ENCODE measurements at regions of chr21 and their contacts with region 1.

Region 1: DNA sequence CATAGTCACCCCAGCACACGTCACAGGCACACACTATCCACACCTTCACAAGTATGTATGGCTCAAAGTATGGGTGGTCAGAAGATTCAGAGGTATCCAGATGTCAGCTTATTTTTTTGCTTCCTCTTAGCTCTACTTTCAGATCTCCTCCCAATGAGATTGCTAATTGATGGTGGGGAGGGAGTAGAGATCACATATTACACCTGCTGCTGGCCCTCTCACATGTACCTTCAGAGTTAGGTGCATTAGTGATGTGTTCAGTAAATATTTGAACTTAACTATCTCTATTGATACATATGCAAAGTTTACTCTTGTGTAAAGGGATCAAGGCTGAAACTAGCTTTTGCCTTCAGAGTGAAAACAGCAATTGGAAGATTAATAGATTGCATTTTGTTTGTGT is 262.6 kb downstream of the PCP4 start:
- DNase-seq: no peak
- H3K4me3 ChIP-seq: no peak overlapping the region
- H3K27ac ChIP-seq: no peak overlapping the region
- H3K4me1 ChIP-seq: no peaks in the 10 kb centered on the region
- H3K27me3 ChIP-seq: no peaks in the 10 kb centered on the region
- CTCF ChIP-seq: no peak
- EP300 ChIP-seq: no peak
- POLR2A ChIP-seq: no peak

Region 2: DNA sequence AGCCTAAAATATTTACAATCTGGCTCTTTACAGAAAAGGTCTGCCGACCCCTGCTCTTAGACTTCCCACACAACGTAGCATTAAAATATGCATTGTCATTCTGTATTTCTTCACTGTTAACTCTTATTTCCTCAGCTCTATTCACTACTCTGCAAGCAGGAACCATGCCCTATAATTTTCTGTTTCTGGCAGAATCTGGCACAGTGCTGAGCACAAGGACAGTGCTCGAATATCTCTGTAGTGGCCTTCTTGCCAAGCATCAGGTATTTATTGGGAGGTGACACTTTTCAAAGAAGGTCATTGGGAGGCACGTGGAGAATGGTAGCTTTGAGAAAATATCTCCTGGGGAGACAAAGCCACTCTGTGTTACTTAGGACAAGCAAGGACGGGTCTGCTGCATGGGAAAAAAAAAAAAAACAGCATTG is 1024.5 kb before region 1 on chr21:
- in situ Hi-C with region 1: no loop called
- intact Hi-C with region 1: no loop called
- DNase-seq: no peak
- H3K4me3 ChIP-seq: no peak overlapping the region
- H3K27ac ChIP-seq: peak overlapping the region; percentile 54 to 68 (median 64)
- H3K4me1 ChIP-seq: peaks cover 0 to 7% (median 2%) of the 10 kb centered on the region in 4 donors
- H3K27me3 ChIP-seq: no peaks in the 10 kb centered on the region
- CTCF ChIP-seq: no peak
- EP300 ChIP-seq: no peak
- POLR2A ChIP-seq: no peak

Region 3: DNA sequence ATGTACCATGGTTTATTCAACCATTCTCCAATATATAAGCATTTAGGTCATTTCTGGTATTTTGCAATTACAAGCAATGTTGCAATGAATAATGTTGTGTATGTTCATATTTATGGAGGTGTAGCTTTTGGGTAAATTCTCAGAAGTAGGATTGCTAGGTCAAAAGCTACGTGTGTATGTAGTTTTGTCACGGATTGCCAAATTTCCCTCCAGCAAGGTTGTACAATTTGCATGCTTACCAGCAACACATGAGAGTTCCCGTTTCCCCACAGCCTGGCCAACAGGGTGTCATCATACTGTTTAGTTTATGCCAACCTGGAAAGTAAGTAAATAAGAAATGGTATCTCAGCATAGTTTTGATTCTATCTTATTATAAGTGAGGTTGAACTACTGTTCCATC is 348.5 kb before region 1 on chr21:
- in situ Hi-C with region 1: no loop called
- intact Hi-C with region 1: loop called (anchors 5 kb)
- DNase-seq: no peak
- H3K4me3 ChIP-seq: no peak overlapping the region
- H3K27ac ChIP-seq: no peak overlapping the region
- H3K4me1 ChIP-seq: no peaks in the 10 kb centered on the region
- H3K27me3 ChIP-seq: no peaks in the 10 kb centered on the region
- CTCF ChIP-seq: no peak
- EP300 ChIP-seq: no peak
- POLR2A ChIP-seq: no peak

Measured in transverse colon (tissue), 4 donors.